ENCODE measurements at regions of chr18 and their contacts with region 1.

Region 1: DNA sequence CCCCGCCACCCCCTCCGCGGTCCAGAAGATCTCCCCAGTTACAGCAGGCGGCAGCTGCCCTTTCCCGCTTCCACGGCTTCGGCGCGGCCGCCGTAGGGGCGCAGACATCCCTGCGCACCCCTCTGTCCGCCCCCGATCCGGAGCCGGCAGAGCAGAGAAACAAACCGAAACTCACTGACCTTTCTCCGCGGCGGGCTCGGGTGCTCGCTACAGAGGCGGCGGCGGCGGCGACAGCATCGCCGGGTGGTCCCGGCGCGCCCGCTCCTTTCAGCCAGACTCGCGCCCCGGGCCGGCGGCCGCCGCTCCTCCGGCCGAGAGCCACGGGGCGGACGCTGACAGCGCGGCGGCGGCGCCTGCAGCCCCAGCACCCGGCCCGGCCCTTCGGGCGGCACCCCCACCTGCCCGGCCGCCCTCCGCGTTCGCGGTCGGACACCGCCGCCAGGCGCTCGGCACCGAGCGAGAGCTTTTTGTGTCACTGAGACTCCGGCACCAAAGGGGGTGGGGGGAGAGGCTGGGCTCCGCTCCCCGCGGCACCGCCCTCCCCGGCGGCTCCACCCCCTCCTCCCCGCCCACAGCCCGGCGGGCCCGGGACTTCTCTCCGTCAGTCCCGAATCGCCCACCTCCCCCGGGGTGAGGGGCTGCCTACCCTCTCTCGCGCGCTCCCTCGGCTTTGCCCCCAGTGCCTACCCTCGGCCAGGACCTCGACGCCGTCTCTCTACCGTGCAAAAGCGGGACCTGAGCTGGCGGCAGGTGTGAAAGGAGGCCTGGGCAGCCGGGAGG is 1.4 kb upstream of the RNF152 start:
- DNase-seq: peak; percentile 78
- H3K4me3 Mint-ChIP-seq: peak overlapping the region; percentile 74
- H3K27ac Mint-ChIP-seq: peak overlapping the region; percentile 74
- H3K4me1 Mint-ChIP-seq: peaks cover 36% of the 10 kb centered on the region
- H3K27me3 Mint-ChIP-seq: no peaks in the 10 kb centered on the region
- CTCF ChIP-seq: peak; percentile 27

Region 2: DNA sequence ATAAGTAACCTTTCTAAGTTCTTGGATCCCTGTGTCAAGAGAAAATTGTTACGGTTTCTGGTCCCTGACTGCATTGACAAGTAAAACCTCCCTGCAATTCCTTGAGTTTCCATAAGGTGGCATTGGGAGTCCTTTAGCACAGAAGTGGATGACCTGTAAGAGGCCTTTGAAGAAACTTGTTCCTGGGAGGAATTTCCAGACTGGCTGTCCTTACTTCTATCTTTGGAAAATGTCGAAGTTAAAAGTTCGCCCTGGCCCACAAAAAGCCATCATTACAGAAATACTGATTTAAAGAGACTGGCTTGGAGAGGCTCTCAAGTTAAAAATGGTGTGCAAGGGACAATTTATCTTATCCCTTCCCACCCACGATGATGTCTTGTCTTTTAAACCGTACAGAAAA is 342.6 kb before region 1 on chr18:
- CTCF ChIA-PET with region 1: interaction called, 13 read pairs
- POLR2A ChIA-PET with region 1: interaction called, 4 read pairs
- intact Hi-C with region 1: loop called (anchors 2 kb)
- DNase-seq: peak; percentile 78
- H3K4me3 Mint-ChIP-seq: no peak overlapping the region
- H3K27ac Mint-ChIP-seq: no peak overlapping the region
- H3K4me1 Mint-ChIP-seq: no peaks in the 10 kb centered on the region
- H3K27me3 Mint-ChIP-seq: no peaks in the 10 kb centered on the region
- CTCF ChIP-seq: peak; percentile 81

Region 3: DNA sequence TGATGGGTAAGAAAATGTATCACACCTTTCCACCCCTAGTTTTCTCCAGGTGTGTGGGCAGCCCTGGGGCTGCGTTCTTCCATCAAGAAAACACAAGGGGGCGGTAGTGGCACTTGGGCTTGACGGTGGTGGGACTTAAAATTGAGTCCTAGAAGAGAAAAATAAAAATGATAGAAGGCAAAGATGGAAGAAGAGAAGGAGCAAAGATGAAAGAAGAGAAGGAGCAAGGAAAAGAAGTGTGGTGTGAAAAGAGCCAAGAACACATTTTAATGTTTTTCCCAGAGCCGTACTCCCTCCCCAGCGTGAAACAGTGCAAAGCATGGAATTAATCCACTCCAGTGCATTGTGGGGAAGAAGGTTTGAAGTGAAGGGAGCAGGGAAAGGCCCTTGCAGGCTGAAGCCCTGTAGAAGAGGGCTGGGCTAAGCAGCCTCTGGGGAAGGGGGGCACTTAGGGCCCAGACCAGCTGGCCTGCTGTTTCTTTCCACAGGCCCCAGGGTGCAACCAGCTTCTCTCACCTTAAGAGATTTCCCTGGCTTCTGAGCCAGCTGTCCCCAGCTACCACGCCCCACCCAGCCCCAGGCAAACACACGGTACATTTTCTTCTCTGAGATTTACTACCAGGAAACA is 258.1 kb before region 1 on chr18:
- CTCF ChIA-PET with region 1: interaction called, 6 read pairs
- POLR2A ChIA-PET with region 1: interaction called, 6 read pairs
- intact Hi-C with region 1: loop called (anchors 5 kb)
- DNase-seq: peak; percentile 61
- H3K4me3 Mint-ChIP-seq: peak overlapping the region; percentile 1
- H3K27ac Mint-ChIP-seq: peak overlapping the region; percentile 2
- H3K4me1 Mint-ChIP-seq: peaks cover 7% of the 10 kb centered on the region
- H3K27me3 Mint-ChIP-seq: no peaks in the 10 kb centered on the region
- CTCF ChIP-seq: peak; percentile 66

Region 4: DNA sequence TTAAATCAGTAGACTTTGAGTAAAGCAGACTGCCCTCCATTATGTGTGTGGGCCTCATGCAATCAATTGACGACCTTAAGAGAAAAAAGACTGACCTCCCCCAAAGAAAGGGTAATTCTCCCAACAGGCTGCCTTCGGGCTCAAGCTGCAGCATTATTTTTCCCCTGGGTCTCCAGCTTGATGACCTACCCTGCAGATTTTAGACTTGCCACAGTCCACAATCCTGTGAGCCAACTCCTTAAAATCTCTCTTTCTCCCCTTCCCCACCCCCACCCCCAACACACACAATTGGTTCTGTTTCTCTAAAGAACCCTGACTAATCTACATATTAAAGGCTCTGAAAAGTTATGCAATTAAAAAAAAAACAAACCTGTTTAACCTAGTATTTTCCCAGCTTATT is 90.8 kb before region 1 on chr18:
- CTCF ChIA-PET with region 1: no interaction called
- POLR2A ChIA-PET with region 1: no interaction called
- intact Hi-C with region 1: no loop called
- DNase-seq: no peak
- H3K4me3 Mint-ChIP-seq: no peak overlapping the region
- H3K27ac Mint-ChIP-seq: no peak overlapping the region
- H3K4me1 Mint-ChIP-seq: no peaks in the 10 kb centered on the region
- H3K27me3 Mint-ChIP-seq: no peaks in the 10 kb centered on the region
- CTCF ChIP-seq: no peak

Region 5: DNA sequence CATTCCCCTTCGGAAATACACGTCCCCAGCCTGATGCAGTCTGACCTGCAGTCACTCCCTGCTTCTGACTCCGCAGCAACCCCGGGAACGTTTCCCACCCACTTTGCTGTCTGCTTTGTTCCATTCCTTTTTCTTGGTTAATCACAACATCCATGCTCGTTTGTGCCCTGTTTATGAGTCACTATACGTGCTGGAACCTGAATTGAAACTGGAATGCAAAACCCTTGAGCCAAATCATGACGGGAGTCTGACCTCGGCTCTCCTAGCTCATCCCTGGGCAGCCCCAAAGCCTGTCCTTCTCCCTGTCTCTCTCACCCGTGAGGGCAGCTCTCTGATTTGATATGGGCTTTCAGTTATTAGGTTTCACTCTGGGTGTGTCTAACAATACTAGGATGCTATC is 55.8 kb after region 1 on chr18:
- CTCF ChIA-PET with region 1: interaction called, 4 read pairs
- POLR2A ChIA-PET with region 1: interaction called, 21 read pairs
- intact Hi-C with region 1: loop called (anchors 1 kb)
- DNase-seq: peak; percentile 94
- H3K4me3 Mint-ChIP-seq: peak overlapping the region; percentile 70
- H3K27ac Mint-ChIP-seq: peak overlapping the region; percentile 73
- H3K4me1 Mint-ChIP-seq: peaks cover 35% of the 10 kb centered on the region
- H3K27me3 Mint-ChIP-seq: no peaks in the 10 kb centered on the region
- CTCF ChIP-seq: no peak

Measured in MCF 10A (cell line).